ENCODE measurements at regions of chr9 and their contacts with region 1.

Region 1: GRCh38 chr9:137240861-137241489 is at the start of gene TUBB4B:
- DNase-seq: peak; percentile 99
- ATAC-seq: peak; percentile 55
- H3K4me3 ChIP-seq: peak within 1 kb of the TSS; percentile 89 to 94 (median 94)
- H3K27ac ChIP-seq: peak within 1 kb of the TSS; percentile 96
- H3K4me1 ChIP-seq: peaks cover 62% of the 10 kb centered on the region
- H3K27me3 ChIP-seq: no peaks in the 10 kb centered on the region; a peak in 1 of 5 replicates
- CTCF ChIP-seq: no peak
- EP300 ChIP-seq: no peak
- POLR2A ChIP-seq: peak in 1 of 2 experiments; percentile 99; a peak in 2 of 4 replicates
- RAD21 ChIP-seq: peak; percentile 69
- total RNA-seq, gene TUBB4B: 412 and 481 TPM in 2 replicates

Region 2: GRCh38 chr9:137129456-137130175 is 111.4 kb before region 1 on chr9:
- CTCF ChIA-PET with region 1: no interaction called
- POLR2A ChIA-PET with region 1: interaction called, 17 read pairs
- in situ Hi-C with region 1: no loop called
- intact Hi-C with region 1: no loop called
- DNase-seq: peak; percentile 81
- ATAC-seq: peak; percentile 95
- H3K4me3 ChIP-seq: peak overlapping the region; percentile 75 to 90 (median 85)
- H3K27ac ChIP-seq: peak overlapping the region; percentile 82
- H3K4me1 ChIP-seq: peaks cover 24% of the 10 kb centered on the region
- H3K27me3 ChIP-seq: no peaks in the 10 kb centered on the region
- CTCF ChIP-seq: no peak; the same call in 1 of the 2 replicates
- EP300 ChIP-seq: no peak; a peak in 1 of 4 replicates
- POLR2A ChIP-seq: peak; percentile 73 to 91
- RAD21 ChIP-seq: peak; percentile 39

Region 3: GRCh38 chr9:137188490-137189296 is 52.3 kb before region 1 on chr9 and contains the starts of genes ANAPC2 and SSNA1:
- CTCF ChIA-PET with region 1: interaction called, 19 read pairs
- POLR2A ChIA-PET with region 1: interaction called, 13 read pairs
- in situ Hi-C with region 1: no loop called
- intact Hi-C with region 1: no loop called
- DNase-seq: peak; percentile 85
- ATAC-seq: peak; percentile 84
- H3K4me3 ChIP-seq: peak within 1 kb of the TSS; percentile 84 to 99 (median 97)
- H3K27ac ChIP-seq: peak within 1 kb of the TSS; percentile 81
- H3K4me1 ChIP-seq: peaks cover 28% of the 10 kb centered on the region
- H3K27me3 ChIP-seq: no peaks in the 10 kb centered on the region
- CTCF ChIP-seq: peak; percentile 88
- EP300 ChIP-seq: peak in 1 of 2 experiments; percentile 18; a peak in 1 of 4 replicates
- POLR2A ChIP-seq: peak in 1 of 2 experiments; percentile 41; a peak in 1 of 4 replicates
- RAD21 ChIP-seq: peak; percentile 92
- total RNA-seq, gene ANAPC2: 7.4 and 12.3 TPM in 2 replicates
- total RNA-seq, gene SSNA1: 41.2 and 49.4 TPM in 2 replicates

Region 4: GRCh38 chr9:137217276-137218211 is 23.4 kb before region 1 on chr9:
- CTCF ChIA-PET with region 1: no interaction called
- POLR2A ChIA-PET with region 1: interaction called, 45 read pairs
- in situ Hi-C with region 1: no loop called
- intact Hi-C with region 1: loop called (anchors 2 kb)
- DNase-seq: peak; percentile 66
- ATAC-seq: peak; percentile 69
- H3K4me3 ChIP-seq: peak overlapping the region; percentile 68 to 83 (median 77)
- H3K27ac ChIP-seq: peak overlapping the region; percentile 84
- H3K4me1 ChIP-seq: peaks cover 29% of the 10 kb centered on the region
- H3K27me3 ChIP-seq: no peaks in the 10 kb centered on the region
- CTCF ChIP-seq: peak; percentile 50
- EP300 ChIP-seq: no peak
- POLR2A ChIP-seq: no peak; a peak in 1 of 4 replicates
- RAD21 ChIP-seq: 0 out of 2 replicates have a peak, but pooled peaks have one; percentile 11

Region 5: GRCh38 chr9:137228506-137228967 is 12.4 kb before region 1 on chr9:
- CTCF ChIA-PET with region 1: interaction called, 3 read pairs
- POLR2A ChIA-PET with region 1: interaction called, 45 read pairs
- in situ Hi-C with region 1: no loop called
- intact Hi-C with region 1: loop called (anchors 2 kb)
- DNase-seq: no peak
- ATAC-seq: peak; percentile 5
- H3K4me3 ChIP-seq: peak overlapping the region; percentile 53 to 72 (median 62); a peak in 5 of 6 replicates
- H3K27ac ChIP-seq: no peak overlapping the region
- H3K4me1 ChIP-seq: peaks cover 77% of the 10 kb centered on the region
- H3K27me3 ChIP-seq: no peaks in the 10 kb centered on the region
- CTCF ChIP-seq: no peak
- EP300 ChIP-seq: no peak
- POLR2A ChIP-seq: no peak
- RAD21 ChIP-seq: no peak

Region 6: GRCh38 chr9:137262909-137263285 is 21.9 kb after region 1 on chr9:
- CTCF ChIA-PET with region 1: interaction called, 13 read pairs
- POLR2A ChIA-PET with region 1: interaction called, 317 read pairs
- in situ Hi-C with region 1: no loop called
- intact Hi-C with region 1: no loop called
- DNase-seq: no peak
- ATAC-seq: no peak
- H3K4me3 ChIP-seq: no peak overlapping the region
- H3K27ac ChIP-seq: no peak overlapping the region
- H3K4me1 ChIP-seq: peaks cover 8% of the 10 kb centered on the region
- H3K27me3 ChIP-seq: no peaks in the 10 kb centered on the region
- CTCF ChIP-seq: no peak
- EP300 ChIP-seq: no peak
- POLR2A ChIP-seq: no peak
- RAD21 ChIP-seq: no peak

Region 7: GRCh38 chr9:137277329-137278041 is 36.5 kb after region 1 on chr9 and contains the start of gene TOR4A:
- CTCF ChIA-PET with region 1: interaction called, 4 read pairs
- POLR2A ChIA-PET with region 1: interaction called, 78 read pairs
- in situ Hi-C with region 1: no loop called
- intact Hi-C with region 1: no loop called
- DNase-seq: peak; percentile 94
- ATAC-seq: peak; percentile 87
- H3K4me3 ChIP-seq: peak within 1 kb of the TSS; percentile 87 to 90 (median 88)
- H3K27ac ChIP-seq: peak within 1 kb of the TSS; percentile 90
- H3K4me1 ChIP-seq: peaks cover 21% of the 10 kb centered on the region
- H3K27me3 ChIP-seq: no peaks in the 10 kb centered on the region; a peak in 1 of 5 replicates
- CTCF ChIP-seq: peak; percentile 83
- EP300 ChIP-seq: peak; percentile 20 to 39; a peak in 2 of 4 replicates
- POLR2A ChIP-seq: peak in 1 of 2 experiments; percentile 85; a peak in 2 of 4 replicates
- RAD21 ChIP-seq: peak; percentile 62
- total RNA-seq, gene TOR4A: 7.0 and 14.2 TPM in 2 replicates